GM10248 (cell line): ENCODE measurements at regions of chr14 and their contacts with region 1.

Region 1: DNA sequence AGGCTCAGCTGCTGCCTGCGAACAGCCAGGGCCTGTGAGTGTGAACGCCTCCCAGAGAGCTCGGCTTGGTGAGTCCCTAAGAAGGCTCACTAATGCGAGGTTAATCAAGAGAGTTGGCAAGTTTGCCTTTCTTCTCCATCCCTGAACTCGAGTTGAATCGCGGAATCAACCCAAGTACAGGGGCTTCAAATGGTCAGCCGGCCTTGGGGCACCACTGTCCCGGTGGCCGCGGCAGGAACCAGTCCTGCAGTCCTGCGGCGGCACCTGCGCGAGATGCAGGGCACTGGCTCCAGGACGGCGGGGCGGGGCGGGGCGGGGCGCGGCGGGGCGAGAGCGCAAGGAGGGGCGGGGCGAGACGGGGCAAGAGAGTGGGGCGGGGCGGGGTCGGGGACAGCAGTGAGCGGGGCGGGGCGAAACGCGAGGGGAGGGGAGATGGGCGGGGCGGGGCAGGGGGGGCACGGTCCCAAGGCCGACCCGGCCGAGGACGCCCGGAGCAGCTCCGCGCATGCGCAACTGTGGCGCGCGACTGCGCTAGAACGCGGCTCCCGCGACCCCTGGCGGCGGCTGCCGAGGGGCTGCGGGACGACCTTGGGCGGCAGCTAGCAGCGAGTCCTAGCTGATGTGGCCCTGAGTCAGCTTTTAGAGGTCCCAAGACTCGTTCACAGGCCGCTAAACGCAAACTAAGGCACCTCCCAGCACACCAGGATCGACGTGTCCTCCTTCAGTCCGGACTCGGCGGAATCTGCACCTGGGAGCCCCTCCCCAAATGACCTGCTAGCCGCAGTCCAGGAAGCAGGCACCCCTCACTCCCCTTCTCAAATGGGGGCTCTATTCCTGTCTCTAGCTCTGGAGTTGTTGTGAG is 58.0 kb downstream of the TTC7B start:
- DNase-seq: peak; percentile 99
- CTCF ChIP-seq: peak; percentile 98

Region 2: GRCh38 chr14:90301668-90302090 is 456.6 kb before region 1 on chr14:
- CTCF ChIA-PET with region 1: interaction called, 15 read pairs
- POLR2A ChIA-PET with region 1: no interaction called
- DNase-seq: no peak
- CTCF ChIP-seq: peak; percentile 41

Region 3: GRCh38 chr14:90399541-90400444 is 358.5 kb before region 1 on chr14:
- CTCF ChIA-PET with region 1: interaction called, 37 read pairs
- POLR2A ChIA-PET with region 1: interaction called, 9 read pairs
- DNase-seq: peak; percentile 87
- CTCF ChIP-seq: peak; percentile 100

Region 4: GRCh38 chr14:90739318-90740068 is 18.8 kb before region 1 on chr14:
- CTCF ChIA-PET with region 1: interaction called, 28 read pairs
- POLR2A ChIA-PET with region 1: no interaction called
- DNase-seq: no peak
- CTCF ChIP-seq: no peak

Region 5: GRCh38 chr14:90774316-90774715 is 16.1 kb after region 1 on chr14:
- CTCF ChIA-PET with region 1: interaction called, 43 read pairs
- POLR2A ChIA-PET with region 1: no interaction called
- DNase-seq: no peak
- CTCF ChIP-seq: no peak